Activated CD8-positive, alpha-beta T cell treated with anti-CD3 and anti-CD28 coated beads, Interleukin-2, amount 10 ng/mL, durations not matched to agents 7 days and 5 days (primary cell): ENCODE measurements at regions of chr10 and their contacts with region 1.

Region 1: GRCh38 chr10:5623081-5623748 is 43.2 kb downstream of the ASB13 start:
- DNase-seq: peak; percentile 87
- ATAC-seq: peak; percentile 96
- H3K4me3 Mint-ChIP-seq: no peak overlapping the region
- H3K27ac Mint-ChIP-seq: no peak overlapping the region
- H3K4me1 Mint-ChIP-seq: peaks cover 5% of the 10 kb centered on the region
- H3K27me3 Mint-ChIP-seq: no peaks in the 10 kb centered on the region

Region 2: DNA sequence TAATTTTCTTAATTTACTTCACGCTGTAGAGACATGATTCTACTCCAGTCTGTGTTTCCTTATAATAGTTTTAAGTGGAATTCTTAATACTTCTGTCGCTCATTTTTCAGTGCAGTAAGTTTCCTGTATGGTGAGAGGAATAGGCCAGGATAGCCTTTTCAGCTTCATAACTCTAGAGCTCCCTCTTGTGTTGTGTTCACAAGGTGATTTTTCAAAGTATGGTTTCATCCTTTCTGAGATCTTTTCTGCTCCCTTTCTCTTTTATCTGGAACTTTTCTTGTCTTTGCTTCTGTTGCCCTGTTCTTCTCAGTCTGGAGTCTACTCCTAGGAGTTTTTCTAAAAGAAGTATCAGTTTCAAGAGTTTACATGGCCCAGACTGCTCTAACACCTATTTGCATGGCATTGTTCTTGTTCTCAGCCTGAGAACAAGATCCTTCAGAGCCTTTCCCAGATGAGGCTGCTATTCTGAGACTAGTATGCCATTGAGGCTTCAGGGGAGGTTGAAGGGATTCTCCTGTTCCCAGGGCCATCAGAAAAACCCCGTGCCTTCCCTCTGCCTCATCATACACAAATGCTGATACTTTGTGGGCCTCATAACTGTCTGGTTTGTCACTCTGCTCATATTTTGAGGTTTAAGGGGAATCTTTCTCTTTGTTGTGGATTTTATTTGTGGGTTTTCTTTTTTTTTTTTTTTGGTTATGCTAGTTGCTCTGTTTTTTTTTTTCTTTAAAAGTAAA is 189.0 kb before region 1 on chr10:
- CTCF ChIA-PET with region 1: interaction called, 198 read pairs
- POLR2A ChIA-PET with region 1: no interaction called
- DNase-seq: no peak
- ATAC-seq: peak; percentile 78
- H3K4me3 Mint-ChIP-seq: peak overlapping the region; percentile 8
- H3K27ac Mint-ChIP-seq: peak overlapping the region; percentile 57
- H3K4me1 Mint-ChIP-seq: peaks cover 13% of the 10 kb centered on the region
- H3K27me3 Mint-ChIP-seq: no peaks in the 10 kb centered on the region

Region 3: GRCh38 chr10:5461914-5462840 is 161.0 kb before region 1 on chr10:
- CTCF ChIA-PET with region 1: interaction called, 12 read pairs
- POLR2A ChIA-PET with region 1: no interaction called
- DNase-seq: no peak
- ATAC-seq: no peak
- H3K4me3 Mint-ChIP-seq: no peak overlapping the region
- H3K27ac Mint-ChIP-seq: no peak overlapping the region
- H3K4me1 Mint-ChIP-seq: peaks cover 8% of the 10 kb centered on the region
- H3K27me3 Mint-ChIP-seq: no peaks in the 10 kb centered on the region

Region 4: GRCh38 chr10:5595591-5596590 is 27.3 kb before region 1 on chr10:
- CTCF ChIA-PET with region 1: interaction called, 11 read pairs
- POLR2A ChIA-PET with region 1: no interaction called
- DNase-seq: no peak
- ATAC-seq: no peak
- H3K4me3 Mint-ChIP-seq: no peak overlapping the region
- H3K27ac Mint-ChIP-seq: no peak overlapping the region
- H3K4me1 Mint-ChIP-seq: no peaks in the 10 kb centered on the region
- H3K27me3 Mint-ChIP-seq: peaks cover 28% of the 10 kb centered on the region